ENCODE measurements at regions of chr13 and their contacts with region 1.

Region 1: GRCh38 chr13:94620286-94620896 is 18.7 kb downstream of the GPR180 start:
- DNase-seq: peak; percentile 13
- ATAC-seq: no peak
- H3K4me3 ChIP-seq: no peak overlapping the region
- H3K4me3 Mint-ChIP-seq: no peak overlapping the region
- H3K27ac ChIP-seq: no peak overlapping the region
- H3K27ac Mint-ChIP-seq: no peak overlapping the region
- H3K4me1 ChIP-seq: no peaks in the 10 kb centered on the region
- H3K4me1 Mint-ChIP-seq: no peaks in the 10 kb centered on the region
- H3K27me3 ChIP-seq: no peaks in the 10 kb centered on the region
- H3K27me3 Mint-ChIP-seq: no peaks in the 10 kb centered on the region
- CTCF ChIP-seq: peak; percentile 69

Region 2: DNA sequence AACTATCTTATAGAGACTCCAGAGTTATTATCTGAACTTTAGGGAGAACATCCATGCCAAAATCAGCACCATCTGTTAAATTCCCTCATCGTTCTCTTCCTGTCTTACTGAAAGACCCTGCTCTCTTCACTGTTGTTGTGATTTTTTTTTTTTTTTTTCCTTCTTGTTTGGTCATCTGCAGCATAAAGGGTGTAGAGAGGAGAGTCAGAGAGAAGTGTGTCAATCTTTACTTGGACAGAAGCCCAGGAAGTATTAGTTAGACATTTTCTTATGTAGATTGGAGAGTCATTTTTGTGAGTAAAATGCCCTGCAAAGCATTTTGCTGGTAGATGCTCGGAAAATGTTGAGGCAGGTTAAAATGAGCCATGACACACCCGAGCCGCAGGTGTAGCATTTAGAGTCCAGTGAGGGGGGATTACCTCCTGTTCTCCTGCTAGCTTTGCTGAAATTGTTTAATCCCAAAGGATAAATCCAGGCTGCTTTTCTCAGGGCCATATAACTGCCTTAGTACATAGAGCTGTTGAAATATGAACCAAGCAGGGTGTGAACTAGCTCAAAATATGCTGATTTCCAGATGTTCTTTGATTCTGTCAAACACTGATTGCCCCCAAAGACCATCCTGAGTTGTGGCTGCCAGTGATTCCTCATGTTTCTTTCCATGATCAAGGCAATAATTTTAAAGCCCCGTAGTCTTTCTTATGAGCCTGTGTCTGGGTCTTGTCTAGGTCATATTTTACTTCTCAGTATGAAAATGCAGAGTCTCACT is 284.4 kb before region 1 on chr13:
- CTCF ChIA-PET with region 1: no interaction called
- POLR2A ChIA-PET with region 1: no interaction called
- intact Hi-C with region 1: no loop called
- DNase-seq: no peak
- ATAC-seq: no peak
- H3K4me3 ChIP-seq: no peak overlapping the region
- H3K4me3 Mint-ChIP-seq: no peak overlapping the region
- H3K27ac ChIP-seq: no peak overlapping the region
- H3K27ac Mint-ChIP-seq: no peak overlapping the region
- H3K4me1 ChIP-seq: no peaks in the 10 kb centered on the region
- H3K4me1 Mint-ChIP-seq: no peaks in the 10 kb centered on the region
- H3K27me3 ChIP-seq: no peaks in the 10 kb centered on the region
- H3K27me3 Mint-ChIP-seq: peaks cover 5% of the 10 kb centered on the region
- CTCF ChIP-seq: no peak

Region 3: DNA sequence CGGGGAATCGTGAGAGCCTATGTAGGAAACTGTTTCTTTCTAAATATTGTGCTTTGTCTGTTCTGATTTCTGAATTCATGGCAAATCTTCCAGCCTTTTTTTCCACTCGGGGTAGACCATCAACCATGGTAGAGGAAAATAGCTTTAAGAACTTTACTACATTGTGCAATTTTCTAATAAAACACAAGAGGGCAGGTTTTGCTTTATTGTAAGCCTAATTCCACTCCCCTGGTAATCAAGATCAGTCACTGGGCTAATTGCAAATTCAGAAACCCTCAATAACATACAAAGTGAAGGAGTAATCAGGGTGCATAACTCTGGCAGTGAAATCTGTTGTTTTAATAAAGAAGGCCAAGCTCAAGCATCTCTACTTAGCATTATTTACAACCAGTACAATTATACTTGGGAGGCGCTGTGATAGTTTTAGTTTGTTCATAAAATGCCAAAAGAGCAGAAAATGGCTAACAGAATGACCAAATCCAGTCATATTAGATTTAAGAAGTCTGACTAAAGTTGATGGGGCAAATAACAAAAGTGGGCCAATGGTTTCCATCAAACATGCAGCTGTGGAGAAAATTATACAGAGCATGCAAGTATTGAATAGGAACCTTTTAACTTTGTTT is 184.7 kb before region 1 on chr13:
- CTCF ChIA-PET with region 1: interaction called, 366 read pairs
- POLR2A ChIA-PET with region 1: no interaction called
- intact Hi-C with region 1: no loop called
- DNase-seq: peak; percentile 53
- ATAC-seq: peak; percentile 58
- H3K4me3 ChIP-seq: no peak overlapping the region
- H3K4me3 Mint-ChIP-seq: no peak overlapping the region
- H3K27ac ChIP-seq: no peak overlapping the region
- H3K27ac Mint-ChIP-seq: no peak overlapping the region
- H3K4me1 ChIP-seq: peaks cover 7 to 8% of the 10 kb centered on the region in 2 donors
- H3K4me1 Mint-ChIP-seq: peaks cover 6% of the 10 kb centered on the region
- H3K27me3 ChIP-seq: no peaks in the 10 kb centered on the region
- H3K27me3 Mint-ChIP-seq: peaks cover 8% of the 10 kb centered on the region
- CTCF ChIP-seq: peak; percentile 72

Region 4: DNA sequence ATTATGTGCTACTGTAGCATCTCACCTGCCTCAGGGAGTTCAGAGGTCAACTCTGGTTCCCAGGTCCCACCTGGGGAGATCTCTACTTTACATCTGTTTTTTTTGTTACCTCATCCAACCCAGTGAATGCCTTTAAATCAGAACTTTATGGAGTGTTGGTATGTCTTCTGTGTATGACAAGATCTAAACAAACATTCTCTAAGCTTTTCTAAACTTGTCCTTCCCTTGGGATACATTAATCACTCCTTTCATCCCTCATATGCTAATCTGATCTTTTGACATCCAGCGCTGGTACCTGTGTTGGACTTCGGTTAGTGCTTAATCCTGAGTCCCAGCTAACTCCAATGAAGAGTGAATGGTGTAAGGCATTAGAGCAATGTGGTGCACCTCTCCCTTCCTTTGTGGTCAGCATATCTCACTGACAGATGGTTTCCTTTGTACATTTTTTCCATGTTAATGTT is 467.4 kb after region 1 on chr13:
- CTCF ChIA-PET with region 1: no interaction called
- POLR2A ChIA-PET with region 1: no interaction called
- intact Hi-C with region 1: no loop called
- DNase-seq: no peak
- ATAC-seq: no peak
- H3K4me3 ChIP-seq: no peak overlapping the region
- H3K4me3 Mint-ChIP-seq: no peak overlapping the region
- H3K27ac ChIP-seq: no peak overlapping the region
- H3K27ac Mint-ChIP-seq: no peak overlapping the region
- H3K4me1 ChIP-seq: no peaks in the 10 kb centered on the region
- H3K4me1 Mint-ChIP-seq: no peaks in the 10 kb centered on the region
- H3K27me3 ChIP-seq: no peaks in the 10 kb centered on the region
- H3K27me3 Mint-ChIP-seq: no peaks in the 10 kb centered on the region
- CTCF ChIP-seq: no peak